Activated CD8-positive, alpha-beta T cell treated with anti-CD3 and anti-CD28 coated beads, Interleukin-2, amount 10 ng/mL, durations not matched to agents 7 days and 5 days (primary cell): ENCODE measurements at regions of chr18 and their contacts with region 1.

Region 1: GRCh38 chr18:12890506-12890905 is 6.5 kb upstream of the PTPN2 start:
- DNase-seq: no peak
- ATAC-seq: peak; percentile 56
- H3K4me3 Mint-ChIP-seq: no peak overlapping the region
- H3K27ac Mint-ChIP-seq: no peak overlapping the region
- H3K4me1 Mint-ChIP-seq: peaks cover 13% of the 10 kb centered on the region
- H3K27me3 Mint-ChIP-seq: peaks cover 10% of the 10 kb centered on the region

Region 2: DNA sequence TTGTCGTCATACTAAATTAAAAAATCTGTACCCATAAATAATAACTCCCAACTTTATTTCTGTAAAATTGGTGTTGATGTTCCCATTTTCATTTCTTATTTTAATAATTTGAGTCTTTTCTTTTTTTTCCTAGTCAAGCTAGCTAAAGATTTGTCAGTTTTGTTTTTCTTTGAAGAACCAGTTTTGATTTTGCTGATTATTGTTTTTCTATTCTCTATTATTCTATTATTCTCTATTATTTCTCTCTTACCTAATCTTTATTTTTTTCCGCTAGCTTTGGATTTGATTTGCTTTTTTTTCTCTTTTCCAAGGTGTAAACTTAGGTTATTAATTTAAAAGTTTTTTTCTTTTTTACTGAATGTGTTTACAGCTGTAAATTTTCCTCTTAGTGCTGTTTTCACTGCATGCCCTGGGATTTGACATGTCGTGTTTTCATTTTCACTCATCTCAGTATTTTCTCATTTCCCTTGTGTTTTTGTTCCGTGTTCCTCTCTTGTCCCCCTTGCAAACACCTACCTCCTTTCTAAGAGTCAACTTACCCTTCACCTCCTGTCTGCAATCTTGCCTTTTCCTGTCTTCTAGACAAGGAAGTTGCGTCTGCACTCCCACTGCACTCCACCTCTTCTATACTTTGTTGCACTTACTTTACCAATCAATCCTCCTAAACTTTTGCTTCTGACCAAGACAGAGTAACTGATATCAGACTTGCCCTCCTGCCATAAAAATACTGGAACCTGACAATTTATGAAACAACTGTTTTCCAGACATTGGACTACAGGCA is 168.8 kb before region 1 on chr18:
- CTCF ChIA-PET with region 1: interaction called, 15 read pairs
- POLR2A ChIA-PET with region 1: no interaction called
- DNase-seq: peak; percentile 5
- ATAC-seq: no peak
- H3K4me3 Mint-ChIP-seq: no peak overlapping the region
- H3K27ac Mint-ChIP-seq: peak overlapping the region; percentile 12
- H3K4me1 Mint-ChIP-seq: no peaks in the 10 kb centered on the region
- H3K27me3 Mint-ChIP-seq: no peaks in the 10 kb centered on the region

Region 3: DNA sequence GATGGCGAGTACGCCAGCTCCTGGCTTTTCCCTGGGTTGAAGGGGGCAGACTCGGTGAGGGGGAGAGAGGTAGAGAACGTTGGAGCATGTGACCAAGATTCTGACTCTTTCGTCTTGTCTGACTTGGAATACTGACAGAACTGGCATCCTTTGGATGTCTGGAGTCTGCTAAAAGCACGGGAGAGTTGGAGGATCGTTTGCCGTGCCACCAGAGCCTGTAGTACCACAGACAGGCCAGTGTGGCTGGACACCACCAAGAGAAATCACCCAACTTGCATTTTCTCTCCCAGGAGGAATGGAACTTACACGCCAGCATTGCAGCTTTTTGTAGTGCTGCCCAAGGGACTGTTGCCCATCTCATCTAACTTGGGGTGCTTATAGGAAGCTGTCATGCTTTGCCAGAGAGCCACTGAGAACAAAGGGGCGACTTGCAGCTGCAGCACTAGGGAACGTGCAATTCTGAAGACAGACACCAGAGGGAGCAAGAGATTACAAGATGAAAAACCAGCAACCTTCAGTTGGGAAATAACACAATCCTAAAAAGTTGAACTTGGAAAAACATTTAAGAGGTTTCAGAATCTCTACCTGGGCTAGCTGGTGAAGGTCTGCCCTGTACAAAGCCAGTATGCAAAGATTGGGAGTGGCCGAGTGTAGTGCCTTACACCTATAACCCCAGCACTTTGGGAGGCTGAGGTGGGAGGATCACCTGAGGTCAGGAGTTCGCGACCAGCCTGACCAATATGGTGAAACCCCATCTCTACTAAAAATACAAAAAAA is 163.5 kb before region 1 on chr18:
- CTCF ChIA-PET with region 1: interaction called, 15 read pairs
- POLR2A ChIA-PET with region 1: no interaction called
- DNase-seq: peak; percentile 75
- ATAC-seq: peak; percentile 61
- H3K4me3 Mint-ChIP-seq: no peak overlapping the region
- H3K27ac Mint-ChIP-seq: no peak overlapping the region
- H3K4me1 Mint-ChIP-seq: peaks cover 3% of the 10 kb centered on the region
- H3K27me3 Mint-ChIP-seq: no peaks in the 10 kb centered on the region

Region 4: GRCh38 chr18:12744103-12744502 is 146.4 kb before region 1 on chr18:
- CTCF ChIA-PET with region 1: interaction called, 30 read pairs
- POLR2A ChIA-PET with region 1: no interaction called
- DNase-seq: no peak
- ATAC-seq: peak; percentile 63
- H3K4me3 Mint-ChIP-seq: no peak overlapping the region
- H3K27ac Mint-ChIP-seq: no peak overlapping the region
- H3K4me1 Mint-ChIP-seq: peaks cover 2% of the 10 kb centered on the region
- H3K27me3 Mint-ChIP-seq: no peaks in the 10 kb centered on the region

Region 5: GRCh38 chr18:12750076-12750714 is 140.3 kb before region 1 on chr18:
- CTCF ChIA-PET with region 1: interaction called, 30 read pairs
- POLR2A ChIA-PET with region 1: no interaction called
- DNase-seq: peak; percentile 62
- ATAC-seq: peak; percentile 61
- H3K4me3 Mint-ChIP-seq: no peak overlapping the region
- H3K27ac Mint-ChIP-seq: peak overlapping the region; percentile 48
- H3K4me1 Mint-ChIP-seq: peaks cover 24% of the 10 kb centered on the region
- H3K27me3 Mint-ChIP-seq: no peaks in the 10 kb centered on the region

Region 6: DNA sequence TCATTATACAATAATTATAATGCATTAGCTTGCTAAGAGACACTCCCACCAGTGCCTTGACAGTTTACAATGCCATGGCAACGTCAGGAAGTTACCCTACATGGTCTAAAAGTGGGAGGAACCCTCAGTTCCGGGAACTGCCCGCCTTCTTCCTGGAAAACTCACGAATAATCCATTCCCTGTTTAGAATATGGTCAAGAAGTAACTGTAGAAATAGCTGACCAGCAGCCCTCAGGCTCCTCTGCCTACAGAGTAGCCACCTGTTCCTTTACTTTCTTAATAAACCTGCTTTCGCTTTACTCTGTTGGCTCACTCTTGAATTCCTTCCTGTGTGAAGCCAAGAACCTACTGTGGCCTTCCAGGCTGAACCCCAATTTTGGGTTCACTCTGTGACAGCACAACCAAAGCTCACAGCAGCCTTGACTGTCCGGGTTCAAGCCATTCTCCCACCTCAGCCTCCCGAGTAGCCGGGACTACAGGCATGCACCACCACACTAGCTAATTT is 13.6 kb after region 1 on chr18:
- CTCF ChIA-PET with region 1: interaction called, 15 read pairs
- POLR2A ChIA-PET with region 1: no interaction called
- DNase-seq: peak; percentile 84
- ATAC-seq: peak; percentile 76
- H3K4me3 Mint-ChIP-seq: peak overlapping the region; percentile 59
- H3K27ac Mint-ChIP-seq: peak overlapping the region; percentile 84
- H3K4me1 Mint-ChIP-seq: peaks cover 8% of the 10 kb centered on the region
- H3K27me3 Mint-ChIP-seq: peaks cover 14% of the 10 kb centered on the region